PC-3 (cell line): ENCODE measurements at regions of chr13 and their contacts with region 1.

Region 1: DNA sequence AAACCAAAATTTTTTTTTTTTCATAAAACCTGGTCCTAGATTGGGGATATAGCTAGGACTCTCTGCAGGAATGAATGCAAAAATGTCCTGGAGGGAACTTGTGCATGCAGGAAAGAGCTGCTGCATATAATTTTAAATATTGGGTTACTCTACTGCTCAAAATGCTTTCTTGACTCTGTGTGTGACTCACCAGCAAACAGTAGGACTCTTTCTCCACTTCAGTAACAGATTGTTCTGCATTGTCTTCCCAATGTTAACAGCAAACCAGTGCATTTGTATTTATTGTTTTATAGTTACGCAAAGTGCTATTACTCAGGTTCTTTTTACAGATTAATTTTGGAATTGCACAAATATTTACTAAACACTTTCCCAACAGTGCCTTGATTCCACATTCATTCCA is 163.7 kb upstream of the KL start:
- DNase-seq: peak; percentile 33
- ATAC-seq: peak; percentile 84
- H3K4me3 ChIP-seq: no peak overlapping the region
- H3K27ac ChIP-seq: peak overlapping the region; percentile 46; the same call in 1 of the 2 replicates
- H3K4me1 ChIP-seq: peaks cover 16% of the 10 kb centered on the region
- H3K27me3 ChIP-seq: no peaks in the 10 kb centered on the region
- CTCF ChIP-seq: no peak

Region 2: DNA sequence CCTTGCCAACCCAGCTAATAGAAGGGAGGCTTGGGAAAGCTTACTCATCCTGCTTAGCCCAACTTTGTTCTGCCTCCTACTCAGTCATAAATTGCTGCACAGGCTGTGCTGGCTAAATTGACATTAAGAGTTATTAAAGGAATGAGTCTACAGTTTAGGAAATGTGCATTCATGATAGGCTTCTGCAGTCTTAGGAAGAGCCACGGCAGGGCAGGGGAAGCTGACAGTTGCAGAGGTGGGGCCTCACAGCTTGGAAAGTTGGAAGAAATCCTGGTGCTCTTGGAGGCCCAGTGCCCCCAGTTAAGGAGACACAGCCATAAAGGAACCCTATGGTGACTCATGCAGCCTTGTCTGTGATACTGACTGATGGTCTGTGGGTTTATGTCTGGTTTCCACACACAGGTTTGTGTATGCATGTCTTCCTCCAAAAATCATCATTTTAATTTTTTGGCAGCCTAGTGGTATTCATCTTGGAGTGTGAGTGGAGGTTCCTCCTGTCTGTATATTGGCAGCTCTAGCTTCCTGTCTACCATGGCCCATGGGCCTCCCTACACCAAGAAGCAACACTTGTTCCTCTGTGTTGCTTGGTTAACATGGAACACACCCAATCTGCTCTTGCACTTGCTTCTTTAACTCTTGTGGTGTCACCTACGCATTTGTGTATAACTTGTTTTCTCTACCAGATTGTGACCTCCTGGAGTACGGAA is 28.7 kb after region 1 on chr13:
- CTCF ChIA-PET with region 1: no interaction called
- POLR2A ChIA-PET with region 1: interaction called, 10 read pairs
- intact Hi-C with region 1: no loop called
- DNase-seq: peak; percentile 33
- ATAC-seq: peak; percentile 60
- H3K4me3 ChIP-seq: no peak overlapping the region
- H3K27ac ChIP-seq: peak overlapping the region; percentile 29
- H3K4me1 ChIP-seq: peaks cover 25% of the 10 kb centered on the region
- H3K27me3 ChIP-seq: no peaks in the 10 kb centered on the region
- CTCF ChIP-seq: no peak